HCT116 (cell line): ENCODE measurements at regions of chr14 and their contacts with region 1.

Region 1: DNA sequence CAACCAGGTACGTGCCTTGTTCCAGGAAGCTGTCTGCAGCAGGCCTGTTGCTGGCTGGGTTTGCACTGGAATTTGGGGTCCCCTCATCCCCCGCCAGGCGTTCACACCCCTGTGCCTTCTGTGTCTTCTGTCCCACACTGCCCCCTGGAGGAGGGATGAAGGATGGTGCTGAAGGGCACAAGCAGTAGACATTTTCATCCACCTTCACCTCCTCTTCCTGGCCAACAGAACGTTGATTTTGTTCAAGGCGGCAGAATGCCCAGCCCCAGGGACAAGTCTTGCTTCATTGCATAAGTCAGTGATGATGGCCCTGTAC is 122.1 kb downstream of the CALM1 start:
- DNase-seq: peak; percentile 37
- ATAC-seq: peak; percentile 77
- H3K4me3 ChIP-seq: no peak overlapping the region
- H3K27ac ChIP-seq: no peak overlapping the region
- H3K4me1 ChIP-seq: peaks cover 39 to 50% of the 10 kb centered on the region in 2 experiments
- H3K27me3 ChIP-seq: no peaks in the 10 kb centered on the region
- CTCF ChIP-seq: peak; percentile 80 to 88 (median 86)
- POLR2A ChIP-seq: no peak
- RAD21 ChIP-seq: peak; percentile 86

Region 2: GRCh38 chr14:90301668-90302090 is 217.2 kb before region 1 on chr14:
- CTCF ChIA-PET with region 1: interaction called, 4 read pairs
- POLR2A ChIA-PET with region 1: no interaction called
- RAD21 ChIA-PET with region 1: interaction called in 1 of 2 experiments, 4 read pairs
- intact Hi-C with region 1: loop called (anchors 1 kb)
- DNase-seq: no peak
- ATAC-seq: no peak
- H3K4me3 ChIP-seq: no peak overlapping the region
- H3K27ac ChIP-seq: no peak overlapping the region
- H3K4me1 ChIP-seq: peaks cover 0 to 7% of the 10 kb centered on the region in 2 experiments; a peak in 1 of 4 replicates
- H3K27me3 ChIP-seq: no peaks in the 10 kb centered on the region
- CTCF ChIP-seq: peak; percentile 22 to 45 (median 43); a peak in 4 of 6 replicates
- POLR2A ChIP-seq: no peak
- RAD21 ChIP-seq: peak; percentile 77